ENCODE measurements at regions of chr1 and their contacts with region 1.

Region 1: GRCh38 chr1:206563367-206564207 is 48.7 kb downstream of the EIF2D start:
- DNase-seq: no peak
- ATAC-seq: peak; percentile 14
- H3K4me3 Mint-ChIP-seq: peak overlapping the region; percentile 62
- H3K27ac Mint-ChIP-seq: peak overlapping the region; percentile 90
- H3K4me1 Mint-ChIP-seq: peaks cover 88% of the 10 kb centered on the region
- H3K27me3 Mint-ChIP-seq: no peaks in the 10 kb centered on the region

Region 2: DNA sequence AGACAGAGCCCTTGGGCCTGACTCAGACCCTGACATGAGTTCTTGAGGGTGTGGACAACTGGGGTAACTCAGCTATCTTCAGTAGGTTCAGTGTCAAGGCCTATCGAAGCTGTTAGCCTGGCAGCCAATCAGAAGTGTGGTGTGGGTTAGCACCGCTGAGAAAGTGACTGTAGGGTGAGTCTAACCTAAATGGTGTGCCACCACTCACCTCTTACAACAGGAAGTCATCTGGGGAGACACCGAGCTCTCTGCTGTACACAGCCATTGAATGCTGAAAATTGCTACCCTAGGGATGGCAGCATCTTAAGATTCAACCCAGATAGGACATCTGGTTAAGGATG is 11.6 kb before region 1 on chr1:
- CTCF ChIA-PET with region 1: interaction called, 175 read pairs
- POLR2A ChIA-PET with region 1: interaction called, 30 read pairs
- DNase-seq: peak; percentile 91
- ATAC-seq: peak; percentile 84
- H3K4me3 Mint-ChIP-seq: peak overlapping the region; percentile 76
- H3K27ac Mint-ChIP-seq: peak overlapping the region; percentile 97
- H3K4me1 Mint-ChIP-seq: peaks cover 65% of the 10 kb centered on the region
- H3K27me3 Mint-ChIP-seq: no peaks in the 10 kb centered on the region

Region 3: GRCh38 chr1:206575165-206575893 is 11.7 kb after region 1 on chr1:
- CTCF ChIA-PET with region 1: interaction called, 728 read pairs
- POLR2A ChIA-PET with region 1: interaction called, 276 read pairs
- DNase-seq: peak; percentile 76
- ATAC-seq: peak; percentile 57
- H3K4me3 Mint-ChIP-seq: peak overlapping the region; percentile 62
- H3K27ac Mint-ChIP-seq: peak overlapping the region; percentile 91
- H3K4me1 Mint-ChIP-seq: peaks cover 99% of the 10 kb centered on the region
- H3K27me3 Mint-ChIP-seq: no peaks in the 10 kb centered on the region